ENCODE measurements at regions of chr6 and their contacts with region 1.

Region 1: GRCh38 chr6:63066055-63066704 is 145.1 kb upstream of the FKBP1C start:
- DNase-seq: no peak
- H3K4me3 ChIP-seq: no peak overlapping the region
- H3K27ac ChIP-seq: no peak overlapping the region
- H3K4me1 ChIP-seq: no peaks in the 10 kb centered on the region
- H3K27me3 ChIP-seq: no peaks in the 10 kb centered on the region
- CTCF ChIP-seq: no peak

Region 2: GRCh38 chr6:62940848-62941247 is 125.3 kb before region 1 on chr6:
- intact Hi-C with region 1: no loop called
- DNase-seq: no peak
- H3K4me3 ChIP-seq: no peak overlapping the region
- H3K27ac ChIP-seq: no peak overlapping the region
- H3K4me1 ChIP-seq: no peaks in the 10 kb centered on the region
- H3K27me3 ChIP-seq: no peaks in the 10 kb centered on the region
- CTCF ChIP-seq: no peak

Region 3: GRCh38 chr6:63268574-63268973 is 202.4 kb after region 1 on chr6:
- intact Hi-C with region 1: loop called (anchors 10 kb)
- DNase-seq: no peak
- H3K4me3 ChIP-seq: no peak overlapping the region
- H3K27ac ChIP-seq: no peak overlapping the region
- H3K4me1 ChIP-seq: no peaks in the 10 kb centered on the region
- H3K27me3 ChIP-seq: no peaks in the 10 kb centered on the region
- CTCF ChIP-seq: no peak

Region 4: DNA sequence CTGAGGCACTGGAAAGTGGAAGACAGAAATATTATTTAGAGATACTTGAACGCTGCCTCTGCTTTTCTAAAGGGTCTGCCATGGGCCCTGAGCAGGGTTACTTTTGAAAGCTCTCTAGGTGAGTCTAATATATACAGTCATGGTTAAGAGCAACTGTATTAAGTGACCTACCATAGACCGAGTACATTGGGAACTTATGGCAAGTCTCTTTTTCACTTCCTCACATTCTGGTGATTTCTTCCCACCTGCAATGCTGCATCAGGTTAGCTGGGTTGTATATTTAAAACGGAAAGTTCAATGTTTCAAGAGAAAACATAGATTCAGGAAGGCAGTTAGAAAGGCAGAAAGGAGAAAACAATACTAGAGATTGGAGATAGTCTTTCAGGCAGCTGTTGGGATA is 724.2 kb after region 1 on chr6:
- intact Hi-C with region 1: loop called (anchors 10 kb)
- DNase-seq: no peak
- H3K4me3 ChIP-seq: no peak overlapping the region
- H3K27ac ChIP-seq: no peak overlapping the region
- H3K4me1 ChIP-seq: no peaks in the 10 kb centered on the region
- H3K27me3 ChIP-seq: no peaks in the 10 kb centered on the region
- CTCF ChIP-seq: no peak

Measured in colonic mucosa (tissue), 4 donors.